CD4-positive, alpha-beta T cell (primary cell): ENCODE measurements at regions of chr11 and their contacts with region 1.

Region 1: DNA sequence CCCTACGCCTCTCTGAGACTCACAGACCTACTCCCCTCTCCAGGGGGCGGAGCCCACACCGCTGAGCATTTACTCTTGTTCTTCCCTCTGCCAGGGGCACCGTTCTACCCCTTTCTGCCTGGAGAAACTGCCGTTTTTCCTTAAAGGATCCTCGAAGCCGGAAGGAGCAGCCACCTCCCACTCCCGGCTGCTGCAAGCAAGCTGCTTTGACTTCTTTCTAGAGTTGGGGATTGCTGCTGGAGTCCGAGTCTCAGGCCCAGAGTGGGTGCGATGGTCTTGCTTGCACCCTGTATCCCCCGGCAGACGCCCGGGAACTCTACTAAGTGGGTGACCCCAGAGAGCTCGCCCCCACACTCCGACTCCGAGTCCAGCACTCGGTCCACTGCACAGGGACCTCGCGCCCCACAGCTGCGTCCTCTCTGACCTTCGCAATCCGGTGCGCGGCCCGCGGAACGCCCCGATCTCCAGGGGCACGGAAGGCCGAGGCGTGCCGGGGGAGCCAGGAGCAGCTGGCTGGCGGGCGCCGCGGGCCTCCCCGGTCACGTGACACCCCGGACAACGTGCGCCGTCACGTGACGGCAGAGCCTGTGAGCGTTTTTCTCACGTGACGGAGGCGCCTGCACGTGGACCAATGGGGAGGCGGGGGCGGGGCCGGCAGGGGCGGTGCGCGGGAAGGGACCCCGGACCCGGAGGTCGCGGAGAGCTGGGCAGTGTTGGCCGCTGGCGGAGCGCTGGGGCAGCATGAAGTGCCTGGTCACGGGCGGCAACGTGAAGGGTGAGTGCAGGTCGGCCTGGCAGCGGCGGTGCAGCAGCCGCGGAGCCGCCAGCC is at the start of gene RAD9A:
- DNase-seq: peak; percentile 82 to 97 (median 90)
- ATAC-seq: peak; percentile 83
- H3K4me3 ChIP-seq: peak within 1 kb of the TSS; percentile 90
- H3K4me3 Mint-ChIP-seq: peak within 1 kb of the TSS; percentile 88
- H3K27ac ChIP-seq: peak within 1 kb of the TSS; percentile 55 to 77
- H3K27ac Mint-ChIP-seq: peak within 1 kb of the TSS; percentile 76
- H3K4me1 ChIP-seq: peaks cover 42% of the 10 kb centered on the region
- H3K4me1 Mint-ChIP-seq: peaks cover 38% of the 10 kb centered on the region
- H3K27me3 ChIP-seq: no peaks in the 10 kb centered on the region
- H3K27me3 Mint-ChIP-seq: no peaks in the 10 kb centered on the region
- CTCF ChIP-seq: no peak
- total RNA-seq, gene RAD9A: 19.3 to 20.3 TPM

Region 2: GRCh38 chr11:66958232-66958955 is 433.1 kb before region 1 on chr11 and contains the start of gene PC:
- CTCF ChIA-PET with region 1: no interaction called
- POLR2A ChIA-PET with region 1: no interaction called
- intact Hi-C with region 1: no loop called
- DNase-seq: peak; percentile 91 to 99 (median 96)
- ATAC-seq: peak; percentile 96
- H3K4me3 ChIP-seq: peak within 1 kb of the TSS; percentile 57
- H3K4me3 Mint-ChIP-seq: peak within 1 kb of the TSS; percentile 91
- H3K27ac ChIP-seq: peak within 1 kb of the TSS; percentile 33 to 41
- H3K27ac Mint-ChIP-seq: peak within 1 kb of the TSS; percentile 71
- H3K4me1 ChIP-seq: peaks cover 20% of the 10 kb centered on the region
- H3K4me1 Mint-ChIP-seq: peaks cover 21% of the 10 kb centered on the region
- H3K27me3 ChIP-seq: no peaks in the 10 kb centered on the region
- H3K27me3 Mint-ChIP-seq: no peaks in the 10 kb centered on the region
- CTCF ChIP-seq: no peak
- total RNA-seq, gene PC: 5.1 to 7.1 TPM

Region 3: DNA sequence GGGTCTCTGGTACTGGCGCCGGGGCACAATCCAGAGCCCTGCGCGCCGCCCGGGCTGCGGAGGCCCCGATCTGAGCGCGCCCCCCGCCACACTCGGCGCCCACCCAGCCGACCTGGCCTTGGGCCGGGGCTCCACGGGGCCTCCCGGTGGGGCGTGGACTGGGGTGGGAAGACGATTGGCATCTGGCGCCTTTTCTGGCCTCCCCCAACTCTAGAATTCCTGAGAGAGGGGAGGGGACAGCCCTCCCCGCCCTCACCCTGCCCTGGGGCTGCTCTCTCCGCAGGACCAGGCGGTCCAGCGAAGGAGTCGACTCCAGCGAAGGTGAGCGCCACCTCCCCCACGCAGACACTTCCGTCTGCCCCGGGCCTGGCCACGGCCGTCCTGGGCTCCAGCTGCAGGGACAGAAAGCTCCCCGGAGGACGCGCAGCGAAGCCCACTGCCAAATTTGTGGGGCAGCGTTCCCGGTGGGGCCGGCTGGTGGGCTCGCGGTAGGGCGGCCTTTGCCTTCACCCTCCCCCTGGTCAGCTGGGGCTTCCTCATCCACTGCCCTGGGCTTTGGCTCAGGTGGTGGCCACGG is 87.6 kb before region 1 on chr11:
- CTCF ChIA-PET with region 1: no interaction called
- POLR2A ChIA-PET with region 1: no interaction called
- intact Hi-C with region 1: no loop called
- DNase-seq: peak in 5 of 14 experiments; percentile 29 to 57 (median 53)
- ATAC-seq: peak; percentile 40
- H3K4me3 ChIP-seq: peak overlapping the region; percentile 62
- H3K4me3 Mint-ChIP-seq: peak overlapping the region; percentile 56
- H3K27ac ChIP-seq: peak overlapping the region in 1 of 2 donors; percentile 41
- H3K27ac Mint-ChIP-seq: no peak overlapping the region
- H3K4me1 ChIP-seq: peaks cover 36% of the 10 kb centered on the region
- H3K4me1 Mint-ChIP-seq: no peaks in the 10 kb centered on the region
- H3K27me3 ChIP-seq: no peaks in the 10 kb centered on the region
- H3K27me3 Mint-ChIP-seq: no peaks in the 10 kb centered on the region
- CTCF ChIP-seq: no peak

Region 4: GRCh38 chr11:67409261-67409666 is 17.7 kb after region 1 on chr11:
- CTCF ChIA-PET with region 1: interaction called, 6 read pairs
- POLR2A ChIA-PET with region 1: interaction called, 61 read pairs
- intact Hi-C with region 1: no loop called
- DNase-seq: peak in 13 of 14 experiments; percentile 45 to 92 (median 76)
- ATAC-seq: peak; percentile 62
- H3K4me3 ChIP-seq: peak overlapping the region; percentile 100
- H3K4me3 Mint-ChIP-seq: peak overlapping the region; percentile 88
- H3K27ac ChIP-seq: peak overlapping the region; percentile 75 to 84
- H3K27ac Mint-ChIP-seq: peak overlapping the region; percentile 98
- H3K4me1 ChIP-seq: peaks cover 98% of the 10 kb centered on the region
- H3K4me1 Mint-ChIP-seq: peaks cover 91% of the 10 kb centered on the region
- H3K27me3 ChIP-seq: no peaks in the 10 kb centered on the region
- H3K27me3 Mint-ChIP-seq: no peaks in the 10 kb centered on the region
- CTCF ChIP-seq: no peak

Region 5: DNA sequence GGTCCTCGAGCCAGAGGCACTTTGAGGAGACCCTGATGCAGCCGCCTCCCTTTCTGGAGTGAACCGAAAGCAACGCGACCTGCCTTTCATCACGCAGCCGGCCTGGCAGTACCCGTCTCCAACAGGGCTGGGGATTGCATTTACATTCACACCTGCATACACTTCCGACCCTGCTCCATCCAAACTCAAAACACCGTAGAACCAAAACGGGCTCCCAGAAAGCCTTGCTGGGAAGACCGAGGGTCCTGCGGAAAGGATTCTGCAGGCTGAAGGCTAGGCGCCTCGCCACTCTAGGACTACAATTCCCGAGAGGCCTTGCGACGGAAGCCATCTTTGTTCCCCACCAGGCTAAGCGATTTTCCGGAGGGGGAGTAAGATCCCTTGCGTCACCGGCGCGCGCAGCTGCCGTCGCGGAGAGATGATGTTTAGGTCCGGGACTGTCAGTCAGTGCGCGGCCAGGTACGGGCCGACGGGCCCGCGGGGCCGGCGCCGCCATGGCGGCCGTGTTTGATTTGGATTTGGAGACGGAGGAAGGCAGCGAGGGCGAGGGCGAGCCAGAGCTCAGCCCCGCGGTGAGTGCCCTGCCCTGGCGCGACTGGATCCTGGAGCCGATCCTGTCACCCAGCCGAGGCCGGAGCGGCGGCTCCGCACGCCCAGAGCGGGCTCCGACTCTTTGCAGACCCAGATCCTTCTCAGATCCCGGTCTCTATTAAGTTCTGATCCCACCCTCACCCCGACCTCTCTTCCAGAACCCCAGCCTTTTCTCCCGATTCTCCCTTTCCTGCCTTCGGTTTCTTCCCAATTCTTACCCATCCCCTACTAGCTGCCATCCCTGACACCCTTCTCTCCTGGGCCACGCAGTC is 36.8 kb after region 1 on chr11 and contains the start of gene RPS6KB2:
- CTCF ChIA-PET with region 1: no interaction called
- POLR2A ChIA-PET with region 1: interaction called, 4 read pairs
- intact Hi-C with region 1: loop called in 1 of 2 experiments (anchors 1 kb)
- DNase-seq: peak; percentile 96 to 100 (median 99)
- ATAC-seq: peak; percentile 84
- H3K4me3 ChIP-seq: peak within 1 kb of the TSS; percentile 92
- H3K4me3 Mint-ChIP-seq: peak within 1 kb of the TSS; percentile 98
- H3K27ac ChIP-seq: peak within 1 kb of the TSS; percentile 85 to 86
- H3K27ac Mint-ChIP-seq: peak within 1 kb of the TSS; percentile 96
- H3K4me1 ChIP-seq: peaks cover 59% of the 10 kb centered on the region
- H3K4me1 Mint-ChIP-seq: peaks cover 33% of the 10 kb centered on the region
- H3K27me3 ChIP-seq: no peaks in the 10 kb centered on the region
- H3K27me3 Mint-ChIP-seq: no peaks in the 10 kb centered on the region
- CTCF ChIP-seq: no peak
- total RNA-seq, gene RPS6KB2: 69.3 to 72.0 TPM

Region 6: DNA sequence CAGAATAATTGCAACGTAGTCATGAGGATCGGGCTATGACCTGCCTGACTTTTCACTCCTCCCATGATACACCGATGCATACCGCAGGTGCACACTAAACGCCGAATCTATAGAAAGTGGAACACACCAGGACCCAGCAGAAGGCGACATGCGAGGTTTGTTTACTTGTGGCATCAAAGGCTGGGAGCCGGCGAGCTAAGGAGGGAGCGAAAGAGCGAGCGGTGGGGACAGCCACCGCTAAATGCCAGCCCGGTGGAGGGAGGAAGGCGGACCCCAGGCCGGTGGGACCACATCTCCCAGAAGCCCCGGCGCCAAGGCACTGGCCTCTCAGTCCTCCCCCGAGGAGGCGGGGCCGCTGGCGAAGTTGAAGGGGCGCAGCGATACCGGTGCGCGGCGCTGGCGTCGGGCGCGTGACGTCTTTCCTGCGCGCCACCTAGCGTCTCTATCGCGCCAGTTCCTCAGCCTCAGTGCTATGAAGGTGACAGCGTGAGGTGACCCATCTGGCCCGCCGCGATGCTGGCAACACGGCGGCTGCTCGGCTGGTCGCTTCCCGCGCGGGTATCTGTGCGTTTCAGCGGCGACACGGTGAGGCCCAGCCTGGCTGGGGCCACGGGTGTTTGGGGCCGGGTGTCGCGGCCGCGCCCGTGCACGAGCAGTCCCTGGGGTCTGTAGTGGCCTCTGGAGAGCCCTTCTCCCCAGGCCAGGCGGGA is 215.1 kb after region 1 on chr11 and contains the start of gene NDUFV1:
- CTCF ChIA-PET with region 1: no interaction called
- POLR2A ChIA-PET with region 1: no interaction called
- intact Hi-C with region 1: loop called in 1 of 2 experiments (anchors 10 kb)
- DNase-seq: peak; percentile 93 to 98 (median 96)
- ATAC-seq: peak; percentile 98
- H3K4me3 ChIP-seq: peak within 1 kb of the TSS; percentile 83
- H3K4me3 Mint-ChIP-seq: peak within 1 kb of the TSS; percentile 88
- H3K27ac ChIP-seq: peak within 1 kb of the TSS; percentile 64 to 79
- H3K27ac Mint-ChIP-seq: peak within 1 kb of the TSS; percentile 70
- H3K4me1 ChIP-seq: peaks cover 23% of the 10 kb centered on the region
- H3K4me1 Mint-ChIP-seq: peaks cover 9% of the 10 kb centered on the region
- H3K27me3 ChIP-seq: peaks cover 0 to 3% of the 10 kb centered on the region in 2 experiments
- H3K27me3 Mint-ChIP-seq: peaks cover 11% of the 10 kb centered on the region
- CTCF ChIP-seq: peak; percentile 81
- total RNA-seq, gene NDUFV1: 223 to 224 TPM